Activated naive CD8-positive, alpha-beta T cell treated with anti-CD3 and anti-CD28 coated beads, Interleukin-2, amount 10 ng/mL, durations not matched to agents 7 days and 5 days (primary cell): ENCODE measurements at regions of chr5 and their contacts with region 1.

Region 1: DNA sequence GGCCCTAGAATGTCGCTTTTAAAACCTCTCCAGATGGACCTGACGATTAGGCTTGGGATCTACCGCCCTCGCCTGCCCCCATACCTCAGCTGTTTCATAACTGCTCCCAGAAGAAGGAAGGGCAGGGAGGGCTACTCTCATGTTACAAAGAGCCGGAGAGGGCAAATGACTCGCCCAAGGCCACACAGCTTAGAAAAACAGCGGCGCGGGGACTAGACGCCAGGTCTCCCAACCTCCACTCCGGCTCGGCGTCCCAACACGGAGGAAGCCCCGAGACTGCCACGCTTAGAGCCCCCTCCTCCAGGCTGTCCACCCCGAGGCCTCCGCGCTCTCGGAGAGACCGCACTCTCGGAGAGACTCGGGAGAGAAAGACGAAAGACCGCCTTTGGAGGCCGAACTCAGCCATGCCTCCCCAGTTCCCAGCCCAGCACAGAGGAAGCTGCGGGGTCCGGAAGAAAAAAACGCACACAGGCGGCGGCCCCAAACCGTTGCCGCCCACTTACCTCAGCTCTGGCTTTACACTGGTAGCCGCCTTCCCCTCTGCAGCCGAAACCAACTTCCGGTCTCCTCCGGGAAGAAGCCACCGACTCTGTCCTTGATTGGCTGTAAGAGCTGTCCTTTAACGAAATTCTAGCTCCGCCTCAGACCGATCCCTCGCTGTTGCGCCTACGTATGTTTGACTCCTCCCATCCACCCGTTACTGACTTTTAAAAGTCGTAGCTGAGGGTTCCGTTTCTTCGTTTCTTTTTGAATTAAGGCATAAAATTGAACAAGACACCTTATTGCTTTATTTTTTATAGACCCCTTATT is at the start of gene MED7:
- DNase-seq: peak; percentile 87
- ATAC-seq: peak; percentile 98
- H3K4me3 Mint-ChIP-seq: peak within 1 kb of the TSS; percentile 86
- H3K27ac Mint-ChIP-seq: peak within 1 kb of the TSS; percentile 96
- H3K4me1 Mint-ChIP-seq: peaks cover 23% of the 10 kb centered on the region
- H3K27me3 Mint-ChIP-seq: no peaks in the 10 kb centered on the region
- total RNA-seq, gene MED7: 15.3 to 15.5 TPM

Region 2: GRCh38 chr5:157108976-157109375 is 33.5 kb before region 1 on chr5 and contains the start of gene HAVCR2:
- POLR2A ChIA-PET with region 1: interaction called, 60 read pairs
- DNase-seq: peak; percentile 63
- ATAC-seq: peak; percentile 95
- H3K4me3 Mint-ChIP-seq: peak within 1 kb of the TSS; percentile 92
- H3K27ac Mint-ChIP-seq: peak within 1 kb of the TSS; percentile 96
- H3K4me1 Mint-ChIP-seq: peaks cover 52% of the 10 kb centered on the region
- H3K27me3 Mint-ChIP-seq: no peaks in the 10 kb centered on the region
- total RNA-seq, gene HAVCR2: 73.8 to 76.9 TPM

Region 3: GRCh38 chr5:157132281-157132612 is 10.3 kb before region 1 on chr5:
- POLR2A ChIA-PET with region 1: interaction called, 29 read pairs
- DNase-seq: no peak
- ATAC-seq: no peak
- H3K4me3 Mint-ChIP-seq: no peak overlapping the region
- H3K27ac Mint-ChIP-seq: no peak overlapping the region
- H3K4me1 Mint-ChIP-seq: peaks cover 29% of the 10 kb centered on the region
- H3K27me3 Mint-ChIP-seq: no peaks in the 10 kb centered on the region

Region 4: DNA sequence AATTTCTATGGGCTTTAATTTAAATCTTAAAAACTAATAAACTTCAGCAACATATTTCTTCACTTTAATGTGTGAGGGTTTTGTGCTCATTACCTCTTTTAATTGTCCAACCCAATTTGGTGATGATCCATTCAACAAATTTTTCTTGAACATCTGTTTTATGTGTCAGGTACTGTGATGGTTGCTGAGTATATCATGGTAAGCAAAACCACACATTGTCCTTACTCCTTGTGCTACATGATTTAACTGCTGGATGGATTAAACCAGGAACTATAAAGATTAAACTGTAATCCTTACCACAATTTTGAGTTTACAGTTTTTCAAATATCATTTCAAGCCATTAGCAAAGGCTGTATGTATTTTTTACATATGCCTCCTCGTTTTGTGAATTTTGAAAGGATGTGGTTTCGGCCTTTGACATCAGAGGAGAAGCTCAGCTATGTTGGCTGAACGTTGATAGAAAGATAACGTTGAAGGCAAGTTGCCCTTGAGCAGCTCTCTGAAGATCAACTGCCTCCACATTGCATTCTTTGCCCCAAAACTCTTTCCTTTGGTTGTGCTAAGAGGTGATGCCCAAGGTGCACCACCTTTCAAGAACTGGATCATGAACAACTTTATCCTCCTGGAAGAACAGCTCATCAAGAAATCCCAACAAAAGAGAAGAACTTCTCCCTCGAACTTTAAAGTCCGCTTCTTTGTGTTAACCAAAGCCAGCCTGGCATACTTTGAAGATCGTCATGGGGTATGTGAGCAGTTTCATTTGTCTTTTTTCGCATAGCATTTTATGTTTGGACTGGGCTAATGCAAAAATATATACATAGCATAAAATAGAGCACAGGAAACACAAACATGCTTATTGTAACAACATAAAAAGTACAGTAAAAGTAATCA is 38.1 kb after region 1 on chr5 and contains the start of gene ITK:
- POLR2A ChIA-PET with region 1: interaction called, 40 read pairs
- DNase-seq: no peak
- ATAC-seq: peak; percentile 74
- H3K4me3 Mint-ChIP-seq: peak within 1 kb of the TSS; percentile 96
- H3K27ac Mint-ChIP-seq: peak within 1 kb of the TSS; percentile 99
- H3K4me1 Mint-ChIP-seq: peaks cover 41% of the 10 kb centered on the region
- H3K27me3 Mint-ChIP-seq: no peaks in the 10 kb centered on the region
- total RNA-seq, gene ITK: 313 to 324 TPM

Region 5: GRCh38 chr5:157205708-157206107 is 63.2 kb after region 1 on chr5:
- POLR2A ChIA-PET with region 1: no interaction called
- DNase-seq: no peak
- ATAC-seq: no peak
- H3K4me3 Mint-ChIP-seq: peak overlapping the region; percentile 20
- H3K27ac Mint-ChIP-seq: peak overlapping the region; percentile 22
- H3K4me1 Mint-ChIP-seq: peaks cover 71% of the 10 kb centered on the region
- H3K27me3 Mint-ChIP-seq: no peaks in the 10 kb centered on the region

Region 6: DNA sequence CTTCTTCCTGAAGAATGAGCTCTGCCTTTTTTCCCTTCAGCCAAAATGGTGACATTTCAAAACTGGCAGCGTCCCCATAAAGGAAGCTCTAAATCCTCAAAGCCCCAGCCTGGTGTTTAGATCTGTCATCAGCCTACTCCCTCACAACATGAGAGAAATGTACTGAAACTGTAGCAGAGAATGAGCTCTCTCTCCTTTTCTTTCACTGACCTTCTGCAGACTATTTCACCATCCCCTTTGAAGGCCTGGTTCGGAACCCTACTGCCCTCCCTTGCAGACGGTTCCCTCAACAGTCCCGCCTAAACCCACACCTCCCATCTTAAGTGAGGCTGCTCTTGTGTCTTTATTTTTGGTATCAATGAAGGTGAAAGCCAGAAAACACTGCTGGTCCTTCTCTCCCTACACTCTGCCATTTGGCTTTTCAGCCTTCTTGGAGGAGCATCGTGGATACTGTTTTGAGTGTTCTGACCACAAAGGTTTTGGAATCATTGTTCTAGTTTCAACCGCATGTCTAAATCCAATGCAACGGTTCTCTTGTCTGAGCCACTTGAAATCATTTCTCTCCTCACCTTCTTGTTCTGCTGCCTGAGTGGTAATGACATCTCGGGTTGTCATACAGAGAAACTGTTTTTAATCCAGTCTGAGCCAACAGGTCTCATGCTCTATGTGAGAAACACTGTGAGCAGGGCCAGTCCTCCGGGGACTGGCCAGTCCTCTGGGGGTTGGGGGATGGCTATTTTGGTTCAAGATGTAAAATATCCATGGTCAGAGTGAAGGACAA is 77.2 kb after region 1 on chr5:
- POLR2A ChIA-PET with region 1: interaction called, 31 read pairs
- DNase-seq: no peak
- ATAC-seq: no peak
- H3K4me3 Mint-ChIP-seq: peak overlapping the region; percentile 66
- H3K27ac Mint-ChIP-seq: peak overlapping the region; percentile 99
- H3K4me1 Mint-ChIP-seq: peaks cover 77% of the 10 kb centered on the region
- H3K27me3 Mint-ChIP-seq: no peaks in the 10 kb centered on the region

Region 7: GRCh38 chr5:157265714-157266285 is 123.3 kb after region 1 on chr5 and contains the start of gene CYFIP2:
- POLR2A ChIA-PET with region 1: interaction called, 16 read pairs
- DNase-seq: peak; percentile 91
- ATAC-seq: peak; percentile 80
- H3K4me3 Mint-ChIP-seq: peak within 1 kb of the TSS; percentile 93
- H3K27ac Mint-ChIP-seq: peak within 1 kb of the TSS; percentile 95
- H3K4me1 Mint-ChIP-seq: peaks cover 66% of the 10 kb centered on the region
- H3K27me3 Mint-ChIP-seq: no peaks in the 10 kb centered on the region
- total RNA-seq, gene CYFIP2: 458 to 480 TPM